ENCODE measurements at regions of chr5 and their contacts with region 1.

Region 1: GRCh38 chr5:179806250-179807222 is at the start of gene MGAT4B:
- DNase-seq: peak in 1 of 2 experiments; percentile 78
- ATAC-seq: peak; percentile 65 to 71
- H3K4me3 ChIP-seq: peak within 1 kb of the TSS; percentile 94
- H3K27ac ChIP-seq: peak within 1 kb of the TSS; percentile 91 to 99
- H3K4me1 ChIP-seq: peaks cover 44% of the 10 kb centered on the region
- CTCF ChIP-seq: no peak
- EP300 ChIP-seq: no peak
- POLR2A ChIP-seq: peak; percentile 63
- RAD21 ChIP-seq: no peak; a peak in 1 of 5 replicates
- polyA plus RNA-seq, gene MGAT4B: 57.4 and 110 TPM in 2 replicates

Region 2: DNA sequence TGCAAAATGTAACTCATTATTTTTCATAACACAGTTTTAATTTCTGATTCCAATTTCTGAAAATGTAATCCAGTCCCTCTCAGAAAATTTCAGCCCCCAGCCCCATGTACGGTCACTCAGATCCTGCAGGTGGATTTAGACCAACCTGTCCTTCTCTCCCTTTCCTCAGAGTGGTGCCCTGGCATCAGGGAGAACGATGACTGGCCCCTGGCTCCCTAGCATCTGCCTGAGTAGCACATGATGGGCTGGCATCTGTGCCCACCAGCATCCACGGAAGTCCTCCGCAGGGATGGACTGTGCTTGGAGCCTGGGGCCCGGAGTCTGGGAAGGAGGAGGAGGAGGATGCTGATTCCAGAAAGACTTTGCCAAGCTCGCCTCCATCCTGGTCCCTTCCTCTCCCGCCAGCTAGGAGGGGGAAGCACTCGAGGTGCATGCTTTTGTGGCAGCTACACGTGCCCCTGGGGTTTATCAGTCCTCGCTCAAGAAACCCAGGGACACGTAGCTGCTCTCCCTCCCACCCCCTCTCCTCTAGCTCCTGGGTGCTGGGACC is 310.6 kb before region 1 on chr5:
- CTCF ChIA-PET with region 1: no interaction called
- POLR2A ChIA-PET with region 1: no interaction called
- DNase-seq: peak in 1 of 2 experiments; percentile 21
- ATAC-seq: peak; percentile 73 to 77; a peak in 4 of 6 replicates
- H3K4me3 ChIP-seq: no peak overlapping the region
- H3K27ac ChIP-seq: no peak overlapping the region
- H3K4me1 ChIP-seq: no peaks in the 10 kb centered on the region
- CTCF ChIP-seq: peak; percentile 13; the same call in 2 of the 3 replicates
- EP300 ChIP-seq: no peak
- POLR2A ChIP-seq: no peak
- RAD21 ChIP-seq: peak; percentile 37 to 56; a peak in 3 of 5 replicates

Region 3: DNA sequence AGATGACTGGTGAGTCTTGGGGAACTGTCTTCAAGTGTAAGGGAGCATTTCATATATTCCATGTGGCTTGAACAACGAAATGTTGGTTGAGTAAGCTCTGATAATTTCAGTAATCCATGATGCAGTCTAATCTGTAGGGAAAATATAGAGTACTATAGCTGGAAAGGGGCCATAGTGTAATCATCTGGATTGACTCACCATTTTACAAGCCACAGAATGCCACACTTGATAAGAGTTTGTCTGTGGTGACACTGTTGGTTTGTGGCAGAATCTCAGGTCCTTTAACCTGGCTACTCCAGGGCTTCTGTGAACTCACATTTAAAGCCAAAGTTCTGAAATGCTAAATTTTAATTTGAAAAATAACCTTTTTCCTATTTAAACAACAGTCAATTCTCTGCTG is 90.2 kb before region 1 on chr5:
- CTCF ChIA-PET with region 1: no interaction called
- POLR2A ChIA-PET with region 1: no interaction called
- DNase-seq: no peak
- ATAC-seq: no peak
- H3K4me3 ChIP-seq: no peak overlapping the region
- H3K27ac ChIP-seq: no peak overlapping the region
- H3K4me1 ChIP-seq: no peaks in the 10 kb centered on the region
- CTCF ChIP-seq: no peak
- EP300 ChIP-seq: no peak
- POLR2A ChIP-seq: no peak
- RAD21 ChIP-seq: no peak

Region 4: DNA sequence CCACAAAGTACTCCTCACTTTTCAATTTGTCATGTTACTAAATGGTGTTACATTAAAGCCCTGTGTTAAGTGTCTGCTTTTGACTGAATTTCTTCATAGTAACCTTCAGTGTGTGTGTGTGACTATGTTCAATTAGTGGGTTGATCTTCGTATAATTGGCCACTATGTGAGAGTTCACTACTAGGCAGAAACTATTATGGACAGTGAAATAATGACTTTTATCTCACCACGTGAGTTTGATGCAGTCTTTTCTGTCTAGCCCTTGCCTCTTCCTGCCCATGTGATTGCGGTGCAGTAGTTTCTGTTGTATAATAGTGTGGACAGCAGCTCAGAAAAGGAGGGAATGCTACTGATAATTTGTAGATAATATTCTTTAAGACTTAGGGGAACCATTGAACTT is 75.7 kb before region 1 on chr5:
- CTCF ChIA-PET with region 1: no interaction called
- POLR2A ChIA-PET with region 1: no interaction called
- DNase-seq: no peak
- ATAC-seq: no peak
- H3K4me3 ChIP-seq: no peak overlapping the region
- H3K27ac ChIP-seq: no peak overlapping the region
- H3K4me1 ChIP-seq: peaks cover 26% of the 10 kb centered on the region
- CTCF ChIP-seq: no peak
- EP300 ChIP-seq: no peak
- POLR2A ChIP-seq: no peak
- RAD21 ChIP-seq: no peak

Region 5: GRCh38 chr5:179780362-179780761 is 26.2 kb before region 1 on chr5:
- CTCF ChIA-PET with region 1: interaction called, 10 read pairs
- POLR2A ChIA-PET with region 1: no interaction called
- DNase-seq: no peak
- ATAC-seq: no peak
- H3K4me3 ChIP-seq: no peak overlapping the region
- H3K27ac ChIP-seq: no peak overlapping the region
- H3K4me1 ChIP-seq: no peaks in the 10 kb centered on the region
- CTCF ChIP-seq: no peak
- EP300 ChIP-seq: no peak
- POLR2A ChIP-seq: no peak
- RAD21 ChIP-seq: no peak

Region 6: DNA sequence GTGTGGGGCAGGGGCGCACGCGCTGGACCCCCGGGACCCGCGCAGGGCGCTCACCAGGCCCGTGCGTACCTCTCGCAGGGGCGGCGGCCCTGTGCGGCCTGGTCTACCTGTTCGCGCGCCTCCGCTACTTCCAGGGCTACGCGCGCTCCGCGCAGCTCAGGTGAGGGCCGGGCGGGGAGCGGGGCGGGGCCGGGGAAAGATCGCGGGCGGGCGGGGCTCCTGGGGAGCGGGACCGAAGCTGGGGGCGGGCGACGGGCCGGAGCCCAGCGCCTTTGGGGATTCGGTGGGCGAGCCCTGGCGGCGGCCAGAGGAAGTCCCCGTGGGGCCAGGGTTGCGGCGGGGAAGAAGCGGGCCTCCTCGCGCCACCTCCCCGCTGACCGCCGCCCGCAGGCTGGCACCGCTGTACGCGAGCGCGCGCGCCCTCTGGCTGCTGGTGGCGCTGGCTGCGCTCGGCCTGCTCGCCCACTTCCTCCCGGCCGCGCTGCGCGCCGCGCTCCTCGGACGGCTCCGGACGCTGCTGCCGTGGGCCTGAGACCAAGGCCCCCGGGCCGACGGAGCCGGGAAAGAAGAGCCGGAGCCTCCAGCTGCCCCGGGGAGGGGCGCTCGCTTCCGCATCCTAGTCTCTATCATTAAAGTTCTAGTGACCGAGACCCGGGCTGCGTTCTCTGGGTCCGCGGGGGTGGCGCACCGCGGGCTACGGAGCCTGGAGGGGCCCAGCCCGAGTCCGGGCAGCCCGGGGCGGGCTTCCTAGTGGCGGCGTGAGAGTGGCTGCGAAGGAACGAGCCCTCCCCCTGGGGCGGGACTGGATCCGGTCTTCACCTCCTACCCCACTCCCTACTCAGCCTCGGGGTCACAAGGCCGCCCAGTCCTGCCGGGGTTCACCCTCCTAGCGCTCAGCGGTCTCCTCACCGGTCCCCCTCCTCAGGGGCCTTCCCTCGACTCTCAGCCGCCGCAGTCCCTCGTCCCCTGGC is 10.4 kb before region 1 on chr5:
- CTCF ChIA-PET with region 1: interaction called, 32 read pairs
- POLR2A ChIA-PET with region 1: no interaction called
- DNase-seq: peak in 1 of 2 experiments; percentile 84
- ATAC-seq: peak; percentile 63 to 83
- H3K4me3 ChIP-seq: peak overlapping the region; percentile 59
- H3K27ac ChIP-seq: peak overlapping the region; percentile 82 to 90
- H3K4me1 ChIP-seq: peaks cover 14% of the 10 kb centered on the region; the same call in 2 of the 3 replicates
- CTCF ChIP-seq: peak; percentile 89
- EP300 ChIP-seq: no peak
- POLR2A ChIP-seq: peak; percentile 28; the same call in 1 of the 2 replicates
- RAD21 ChIP-seq: peak; percentile 39 to 67; a peak in 4 of 5 replicates

Region 7: DNA sequence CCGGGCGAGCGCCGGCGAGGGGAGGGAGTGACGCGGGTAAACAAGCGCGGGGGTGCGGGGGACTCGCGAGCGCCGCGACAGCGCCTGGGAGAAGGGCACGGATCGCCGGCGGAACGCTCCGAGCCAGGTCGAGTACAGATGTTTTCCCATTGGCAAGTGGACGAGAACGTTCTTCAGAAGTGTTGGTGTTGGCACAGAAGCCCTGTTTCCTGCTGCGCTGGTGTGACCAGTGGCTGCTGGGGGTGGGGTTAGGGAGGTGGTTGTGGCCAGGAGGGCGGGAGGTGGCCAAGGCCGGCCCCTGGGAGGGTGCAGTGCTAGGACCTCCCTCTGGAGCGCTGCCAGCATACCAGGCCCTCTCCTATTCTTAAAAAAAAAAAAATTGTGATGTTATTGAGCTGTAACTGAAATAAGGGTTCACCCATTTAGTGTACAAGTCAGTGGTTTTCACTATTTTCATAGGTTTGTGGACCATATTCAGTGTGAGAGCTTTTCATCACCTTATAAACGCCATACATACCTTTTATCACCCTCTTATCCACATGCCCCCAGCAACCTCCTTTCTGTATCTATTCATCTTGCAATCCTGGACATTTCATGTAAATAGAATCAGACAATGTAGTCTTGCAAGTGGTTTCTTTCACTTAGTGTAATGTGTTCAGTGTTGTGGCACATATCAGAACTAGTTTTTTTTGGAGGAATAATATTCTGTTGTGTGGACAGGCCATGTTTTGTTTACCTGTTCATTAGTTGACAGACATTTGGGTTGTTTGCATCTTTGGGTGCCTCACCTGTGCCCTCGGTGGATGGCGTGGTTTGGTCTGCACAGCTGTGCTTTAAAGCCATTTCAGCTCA is 15.3 kb after region 1 on chr5:
- CTCF ChIA-PET with region 1: interaction called, 86 read pairs
- POLR2A ChIA-PET with region 1: interaction called, 20 read pairs
- DNase-seq: peak; percentile 92 to 95
- ATAC-seq: peak; percentile 16 to 65; a peak in 3 of 6 replicates
- H3K4me3 ChIP-seq: peak overlapping the region; percentile 81
- H3K27ac ChIP-seq: peak overlapping the region; percentile 95 to 98
- H3K4me1 ChIP-seq: peaks cover 73% of the 10 kb centered on the region
- CTCF ChIP-seq: no peak
- EP300 ChIP-seq: no peak
- POLR2A ChIP-seq: peak; percentile 75
- RAD21 ChIP-seq: no peak

Region 8: DNA sequence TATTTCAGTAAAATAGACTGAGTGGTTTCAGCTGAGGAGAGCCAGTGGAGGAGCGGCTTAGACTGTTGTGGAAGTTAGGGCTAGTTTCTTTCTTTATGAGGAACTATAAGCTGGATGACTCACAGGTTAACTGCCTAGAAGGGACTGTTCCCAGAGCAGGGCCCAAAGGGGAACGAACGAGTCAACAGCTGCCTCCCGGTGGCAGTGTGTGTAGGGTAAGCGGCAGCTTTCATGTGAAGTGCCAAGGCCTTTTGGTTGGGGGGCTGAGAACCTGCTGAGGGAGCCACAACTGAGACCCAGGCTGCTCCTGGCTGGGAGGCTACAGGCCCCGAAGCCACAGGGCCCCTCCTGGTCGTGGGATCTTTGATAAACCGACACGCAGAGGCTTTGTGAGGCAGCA is 21.1 kb after region 1 on chr5:
- CTCF ChIA-PET with region 1: interaction called, 86 read pairs
- POLR2A ChIA-PET with region 1: interaction called, 3 read pairs
- DNase-seq: peak in 1 of 2 experiments; percentile 50
- ATAC-seq: peak in 1 of 2 experiments; percentile 2; a peak in 3 of 6 replicates
- H3K4me3 ChIP-seq: no peak overlapping the region
- H3K27ac ChIP-seq: peak overlapping the region in 1 of 2 experiments; percentile 31; a peak in 1 of 6 replicates
- H3K4me1 ChIP-seq: peaks cover 92% of the 10 kb centered on the region
- CTCF ChIP-seq: no peak
- EP300 ChIP-seq: no peak
- POLR2A ChIP-seq: no peak
- RAD21 ChIP-seq: no peak

Region 9: DNA sequence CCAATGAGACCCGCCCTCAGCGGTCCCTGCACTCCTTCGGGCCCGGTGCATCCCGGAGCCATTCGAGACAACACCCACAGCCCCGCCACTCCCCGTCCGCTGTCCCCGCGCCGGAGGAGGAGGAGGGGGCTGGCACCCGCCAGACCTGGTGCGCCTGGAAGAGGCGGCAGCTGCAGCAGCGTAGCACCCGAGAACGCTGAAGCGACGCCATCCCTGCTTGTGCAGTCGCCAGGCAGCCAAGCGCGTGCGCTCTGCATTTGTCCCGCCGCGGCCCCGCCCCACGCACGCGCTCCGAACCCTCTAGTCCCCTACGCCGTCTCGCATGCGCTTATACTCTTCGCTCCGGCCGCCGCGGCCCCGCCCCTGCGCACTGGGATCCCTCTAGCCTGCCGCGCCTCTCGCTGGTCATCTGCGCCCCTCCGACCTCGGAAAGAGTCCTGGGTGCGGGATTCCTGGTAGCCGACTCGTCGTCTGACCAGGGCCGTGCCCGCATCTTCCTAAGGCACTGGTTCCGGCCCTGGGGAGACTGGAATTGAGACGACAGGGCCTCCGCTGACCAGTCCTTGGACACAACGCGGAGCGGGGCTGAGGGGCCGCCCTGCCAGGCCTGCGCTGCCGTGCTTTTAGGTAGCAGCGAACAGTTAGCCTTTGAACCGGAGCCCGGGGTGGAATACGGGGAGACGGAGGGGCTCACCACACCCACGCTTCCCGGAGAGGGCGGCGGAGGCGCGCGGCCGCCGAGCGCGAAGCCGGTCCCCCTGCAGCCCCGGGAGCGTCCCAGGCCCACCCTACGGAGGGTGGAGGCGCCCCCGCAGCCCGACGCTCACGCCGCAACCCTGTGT is 52.3 kb after region 1 on chr5 and contains the start of gene MRNIP:
- CTCF ChIA-PET with region 1: interaction called, 10 read pairs
- POLR2A ChIA-PET with region 1: no interaction called
- DNase-seq: peak; percentile 86 to 97
- ATAC-seq: peak; percentile 92 to 98
- H3K4me3 ChIP-seq: peak within 1 kb of the TSS; percentile 75
- H3K27ac ChIP-seq: peak within 1 kb of the TSS; percentile 89 to 95
- H3K4me1 ChIP-seq: peaks cover 9% of the 10 kb centered on the region; the same call in 2 of the 3 replicates
- CTCF ChIP-seq: no peak
- EP300 ChIP-seq: no peak
- POLR2A ChIP-seq: peak; percentile 96
- RAD21 ChIP-seq: peak in 1 of 2 experiments; percentile 30; a peak in 2 of 5 replicates
- polyA plus RNA-seq, gene MRNIP: 21.4 and 26.1 TPM in 2 replicates

Region 10: DNA sequence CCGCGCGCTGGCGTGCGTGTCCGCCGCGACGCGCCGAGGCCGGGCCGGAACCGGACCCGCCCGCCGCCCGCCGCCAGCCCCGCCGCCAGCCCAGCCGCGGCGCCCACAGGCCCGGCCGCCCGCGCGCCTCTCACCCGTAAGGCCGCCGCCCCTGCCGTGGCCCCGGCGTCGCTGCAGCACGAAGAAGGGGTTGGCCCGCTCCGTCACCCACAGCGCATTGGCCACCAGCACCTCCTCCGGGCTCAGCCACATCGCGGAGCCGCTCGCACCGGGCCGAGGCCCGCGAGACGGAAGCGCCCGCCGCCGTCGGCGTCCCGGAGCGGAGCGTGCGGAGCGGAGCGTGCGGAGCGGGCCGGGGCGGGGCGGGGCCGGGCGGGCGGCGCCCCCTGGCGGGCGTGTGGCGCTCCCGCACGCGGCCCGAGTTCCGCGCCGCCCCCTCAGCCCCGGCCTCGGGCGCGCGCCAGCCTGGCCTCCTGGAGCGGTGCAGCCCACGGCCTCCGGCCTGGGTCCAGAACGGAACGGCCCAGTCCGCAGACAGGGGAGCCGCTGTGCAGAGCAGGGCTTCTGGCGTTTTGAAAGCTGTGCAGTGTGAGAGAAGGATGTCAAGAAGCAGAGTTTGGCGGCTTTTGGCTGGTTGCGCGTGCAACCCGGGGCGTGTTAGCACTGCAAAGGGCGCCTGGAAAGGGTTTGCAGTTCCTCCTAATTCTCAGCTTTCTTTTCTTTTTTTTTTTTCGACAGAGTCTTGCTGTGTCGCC is 101.2 kb after region 1 on chr5 and contains the start of gene TBC1D9B:
- CTCF ChIA-PET with region 1: interaction called, 13 read pairs
- POLR2A ChIA-PET with region 1: no interaction called
- DNase-seq: peak; percentile 43 to 57
- ATAC-seq: peak; percentile 88 to 90
- H3K4me3 ChIP-seq: peak within 1 kb of the TSS; percentile 67
- H3K27ac ChIP-seq: peak within 1 kb of the TSS; percentile 89 to 96
- H3K4me1 ChIP-seq: peaks cover 6% of the 10 kb centered on the region; the same call in 2 of the 3 replicates
- CTCF ChIP-seq: peak; percentile 92
- EP300 ChIP-seq: no peak
- POLR2A ChIP-seq: peak; percentile 86
- RAD21 ChIP-seq: no peak
- polyA plus RNA-seq, gene TBC1D9B: 37.2 and 45.2 TPM in 2 replicates

Region 11: GRCh38 chr5:180018347-180019060 is 212.0 kb after region 1 on chr5:
- CTCF ChIA-PET with region 1: no interaction called
- POLR2A ChIA-PET with region 1: no interaction called
- DNase-seq: no peak
- ATAC-seq: no peak
- H3K4me3 ChIP-seq: no peak overlapping the region
- H3K27ac ChIP-seq: no peak overlapping the region
- H3K4me1 ChIP-seq: no peaks in the 10 kb centered on the region
- CTCF ChIP-seq: no peak
- EP300 ChIP-seq: no peak
- POLR2A ChIP-seq: no peak
- RAD21 ChIP-seq: no peak

Measured in A549 (cell line).